Mammary epithelial cell (primary cell): ENCODE measurements at regions of chr10 and their contacts with region 1.

Region 1: GRCh38 chr10:132616170-132616995 is 78.8 kb downstream of the INPP5A start:
- DNase-seq: no peak
- H3K4me3 ChIP-seq: no peak overlapping the region
- H3K27ac ChIP-seq: no peak overlapping the region
- H3K4me1 ChIP-seq: no peaks in the 10 kb centered on the region
- H3K27me3 ChIP-seq: no peaks in the 10 kb centered on the region
- CTCF ChIP-seq: no peak

Region 2: GRCh38 chr10:132027423-132027983 is 588.9 kb before region 1 on chr10:
- CTCF ChIA-PET with region 1: no interaction called
- dilution Hi-C with region 1: no loop called
- in situ Hi-C with region 1: no loop called
- intact Hi-C with region 1: no loop called
- DNase-seq: no peak
- H3K4me3 ChIP-seq: no peak overlapping the region
- H3K27ac ChIP-seq: no peak overlapping the region
- H3K4me1 ChIP-seq: peaks cover 4% of the 10 kb centered on the region
- H3K27me3 ChIP-seq: no peaks in the 10 kb centered on the region
- CTCF ChIP-seq: no peak

Region 3: DNA sequence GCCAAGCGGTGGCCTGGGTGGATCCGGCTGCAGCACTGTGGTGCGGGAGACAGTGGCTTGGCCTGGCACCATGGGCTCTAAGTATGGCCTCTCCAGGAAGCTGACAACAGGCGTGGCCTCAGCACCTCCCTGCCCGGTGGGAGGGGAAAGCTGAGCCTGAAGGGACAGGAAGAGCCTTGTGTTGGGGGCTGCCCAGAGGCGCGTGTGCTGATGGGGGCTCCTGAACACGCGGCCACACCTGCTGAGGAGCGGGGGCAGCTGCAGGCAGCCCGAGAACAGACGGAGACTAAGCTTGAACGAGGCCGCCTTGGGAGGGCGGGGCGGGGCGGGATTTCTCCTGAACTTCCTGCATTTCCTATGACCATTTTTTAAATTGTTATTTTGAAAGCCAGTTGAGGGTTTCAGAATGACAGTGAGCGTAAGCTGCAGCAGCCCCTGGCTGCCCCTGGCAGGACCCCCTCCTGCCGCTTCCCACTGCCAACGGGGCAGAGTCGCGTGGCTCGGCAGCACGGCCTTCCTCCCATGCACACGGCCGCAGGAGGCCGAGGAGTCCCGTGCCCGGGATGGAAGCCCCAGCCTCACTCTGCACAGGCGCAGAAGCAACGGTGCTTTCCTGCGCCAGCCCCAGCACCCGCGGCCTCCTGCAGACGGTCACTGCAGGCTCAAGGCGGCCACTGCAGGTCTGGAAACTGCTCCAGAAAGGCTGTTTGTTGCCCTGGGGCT is 386.4 kb before region 1 on chr10:
- CTCF ChIA-PET with region 1: no interaction called
- dilution Hi-C with region 1: loop called (anchors 10 kb)
- in situ Hi-C with region 1: no loop called
- intact Hi-C with region 1: no loop called
- DNase-seq: no peak
- H3K4me3 ChIP-seq: peak overlapping the region in 2 of 3 experiments; percentile 2 to 11
- H3K27ac ChIP-seq: no peak overlapping the region
- H3K4me1 ChIP-seq: peaks cover 4% of the 10 kb centered on the region
- H3K27me3 ChIP-seq: no peaks in the 10 kb centered on the region
- CTCF ChIP-seq: no peak

Region 4: DNA sequence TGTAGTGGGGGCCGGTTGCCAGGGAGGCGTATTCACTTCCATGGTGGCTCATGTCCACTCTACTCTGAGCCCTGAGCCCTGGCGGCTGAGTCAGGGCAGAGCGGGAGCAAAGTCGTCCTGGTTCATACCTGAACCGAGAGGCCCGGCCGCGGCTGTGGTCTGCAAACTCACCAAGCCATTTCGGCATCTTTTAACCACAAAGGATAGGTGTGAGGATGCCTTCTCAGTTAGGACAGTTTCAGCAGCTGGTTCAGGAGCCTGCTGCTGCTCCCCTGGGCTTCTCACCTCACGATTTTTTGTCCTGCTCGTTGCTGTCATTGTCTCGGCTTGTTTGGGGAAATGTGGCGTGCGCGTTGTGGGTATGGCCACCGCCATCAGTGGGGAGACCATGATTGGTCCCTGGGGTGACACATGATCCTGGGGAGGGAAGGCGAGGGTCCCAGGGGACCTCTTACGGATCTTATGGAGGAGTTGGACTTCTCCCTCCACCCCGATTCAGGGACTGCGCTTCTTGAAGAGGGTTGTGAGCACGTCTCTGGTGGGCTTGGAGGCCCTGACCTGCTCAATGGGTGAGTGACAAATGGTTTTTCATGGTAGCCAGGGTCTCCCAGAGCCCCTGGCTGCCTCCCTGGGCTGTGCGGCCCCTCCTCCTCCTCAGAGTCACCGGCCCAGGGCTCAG is 52.4 kb before region 1 on chr10:
- CTCF ChIA-PET with region 1: no interaction called
- dilution Hi-C with region 1: no loop called
- in situ Hi-C with region 1: no loop called
- intact Hi-C with region 1: no loop called
- DNase-seq: no peak
- H3K4me3 ChIP-seq: no peak overlapping the region
- H3K27ac ChIP-seq: no peak overlapping the region
- H3K4me1 ChIP-seq: no peaks in the 10 kb centered on the region
- H3K27me3 ChIP-seq: no peaks in the 10 kb centered on the region
- CTCF ChIP-seq: no peak